ENCODE measurements at regions of chr10 and their contacts with region 1.

Region 1: DNA sequence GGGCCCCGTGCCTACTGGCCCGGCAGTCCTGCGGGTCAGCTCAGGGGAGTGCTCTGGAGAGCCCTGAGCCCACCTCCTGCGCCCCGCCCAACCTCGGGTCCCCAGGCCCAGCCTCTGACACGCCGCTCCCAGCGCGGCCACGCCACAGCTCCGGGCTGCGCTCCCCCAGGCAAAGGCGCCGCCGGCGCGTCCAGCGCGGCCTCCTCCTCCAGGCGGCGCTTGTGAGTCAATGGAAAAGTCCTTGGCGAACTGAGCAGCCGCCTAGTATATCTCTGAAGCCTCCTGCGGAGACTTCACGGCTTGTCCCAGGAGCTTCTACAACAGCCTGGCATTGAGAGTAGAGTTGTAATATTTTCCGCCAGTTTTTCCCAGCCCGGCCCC is 29.5 kb upstream of the BMS1 start:
- DNase-seq: peak; percentile 82 to 94
- ATAC-seq: peak; percentile 93
- H3K4me3 ChIP-seq: peak overlapping the region in 1 of 2 donors; percentile 38
- H3K27ac ChIP-seq: no peak overlapping the region
- H3K4me1 ChIP-seq: no peaks in the 10 kb centered on the region
- H3K27me3 ChIP-seq: no peaks in the 10 kb centered on the region

Region 2: GRCh38 chr10:42638055-42638820 is 114.9 kb before region 1 on chr10 and contains the start of gene ZNF33B:
- intact Hi-C with region 1: loop called in 1 of 2 experiments (anchors 10 kb)
- DNase-seq: peak; percentile 97
- ATAC-seq: peak; percentile 98
- H3K4me3 ChIP-seq: peak within 1 kb of the TSS; percentile 75 to 84
- H3K27ac ChIP-seq: peak within 1 kb of the TSS in 1 of 2 donors; percentile 58
- H3K4me1 ChIP-seq: no peaks in the 10 kb centered on the region
- H3K27me3 ChIP-seq: no peaks in the 10 kb centered on the region
- total RNA-seq, gene ZNF33B: 15.7 to 21.0 TPM

Region 3: GRCh38 chr10:42782446-42783180 is 29.5 kb after region 1 on chr10 and contains the start of gene BMS1:
- intact Hi-C with region 1: loop called in 1 of 2 experiments (anchors 2 kb)
- DNase-seq: peak; percentile 93
- ATAC-seq: peak; percentile 97
- H3K4me3 ChIP-seq: peak within 1 kb of the TSS; percentile 49 to 69
- H3K27ac ChIP-seq: peak within 1 kb of the TSS; percentile 9 to 79
- H3K4me1 ChIP-seq: no peaks in the 10 kb centered on the region
- H3K27me3 ChIP-seq: no peaks in the 10 kb centered on the region
- total RNA-seq, gene BMS1: 12.8 to 13.4 TPM

Region 4: GRCh38 chr10:43105102-43105785 is 352.1 kb after region 1 on chr10:
- intact Hi-C with region 1: loop called (anchors 2 to 10 kb)
- DNase-seq: peak; percentile 79 to 91
- ATAC-seq: peak; percentile 96
- H3K4me3 ChIP-seq: peak overlapping the region in 1 of 2 donors; percentile 23
- H3K27ac ChIP-seq: no peak overlapping the region
- H3K4me1 ChIP-seq: no peaks in the 10 kb centered on the region
- H3K27me3 ChIP-seq: no peaks in the 10 kb centered on the region

Measured in aorta (tissue), 5 donors.